Endothelial cell of umbilical vein (primary cell): ENCODE measurements at regions of chr1 and their contacts with region 1.

Region 1: GRCh38 chr1:58652651-58653184 is 47.1 kb downstream of the MYSM1 start:
- DNase-seq: peak; percentile 89
- H3K4me3 ChIP-seq: no peak overlapping the region
- H3K27ac ChIP-seq: no peak overlapping the region
- H3K4me1 ChIP-seq: no peaks in the 10 kb centered on the region
- H3K27me3 ChIP-seq: no peaks in the 10 kb centered on the region
- CTCF ChIP-seq: peak; percentile 64 to 82
- POLR2A ChIP-seq: no peak

Region 2: GRCh38 chr1:56831871-56832693 is 1820.6 kb before region 1 on chr1:
- CTCF ChIA-PET with region 1: interaction called, 4 read pairs
- POLR2A ChIA-PET with region 1: no interaction called
- dilution Hi-C with region 1: no loop called
- intact Hi-C with region 1: loop called (anchors 2 kb)
- DNase-seq: peak; percentile 87
- H3K4me3 ChIP-seq: no peak overlapping the region
- H3K27ac ChIP-seq: peak overlapping the region; percentile 53
- H3K4me1 ChIP-seq: peaks cover 9% of the 10 kb centered on the region
- H3K27me3 ChIP-seq: no peaks in the 10 kb centered on the region
- CTCF ChIP-seq: peak; percentile 86 to 93
- POLR2A ChIP-seq: no peak

Region 3: DNA sequence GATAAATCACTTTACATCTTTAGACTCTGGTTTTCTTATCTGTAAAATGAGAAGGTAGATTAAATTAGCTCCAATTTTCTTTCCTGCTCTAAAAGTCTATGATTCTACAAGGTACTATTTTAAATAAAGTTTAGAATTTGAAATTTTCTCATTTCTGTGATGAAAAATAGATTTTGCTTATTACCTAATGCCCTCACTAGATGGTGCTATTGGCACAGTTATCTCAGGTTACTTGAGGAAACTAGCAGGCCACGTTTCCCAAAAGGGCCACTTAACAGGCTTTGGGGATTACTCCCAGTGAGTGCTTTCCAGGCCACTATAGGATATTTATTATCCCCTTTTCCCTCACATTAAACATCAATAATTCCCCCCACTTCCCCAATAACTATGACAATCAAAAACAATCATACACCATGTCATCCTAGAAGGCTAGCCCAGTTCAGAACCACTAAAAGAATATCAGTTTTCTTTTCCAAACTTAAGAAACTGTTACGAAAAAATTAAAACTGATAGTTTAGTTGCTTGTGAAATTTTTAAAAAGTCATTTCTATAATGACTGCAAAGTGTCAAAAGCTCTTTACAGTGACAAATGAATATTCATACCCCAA is 136.8 kb before region 1 on chr1:
- CTCF ChIA-PET with region 1: interaction called, 110 read pairs
- POLR2A ChIA-PET with region 1: no interaction called
- dilution Hi-C with region 1: no loop called
- intact Hi-C with region 1: loop called (anchors 1 kb)
- DNase-seq: peak; percentile 71
- H3K4me3 ChIP-seq: no peak overlapping the region
- H3K27ac ChIP-seq: no peak overlapping the region
- H3K4me1 ChIP-seq: no peaks in the 10 kb centered on the region
- H3K27me3 ChIP-seq: no peaks in the 10 kb centered on the region
- CTCF ChIP-seq: peak; percentile 37 to 58
- POLR2A ChIP-seq: no peak

Region 4: DNA sequence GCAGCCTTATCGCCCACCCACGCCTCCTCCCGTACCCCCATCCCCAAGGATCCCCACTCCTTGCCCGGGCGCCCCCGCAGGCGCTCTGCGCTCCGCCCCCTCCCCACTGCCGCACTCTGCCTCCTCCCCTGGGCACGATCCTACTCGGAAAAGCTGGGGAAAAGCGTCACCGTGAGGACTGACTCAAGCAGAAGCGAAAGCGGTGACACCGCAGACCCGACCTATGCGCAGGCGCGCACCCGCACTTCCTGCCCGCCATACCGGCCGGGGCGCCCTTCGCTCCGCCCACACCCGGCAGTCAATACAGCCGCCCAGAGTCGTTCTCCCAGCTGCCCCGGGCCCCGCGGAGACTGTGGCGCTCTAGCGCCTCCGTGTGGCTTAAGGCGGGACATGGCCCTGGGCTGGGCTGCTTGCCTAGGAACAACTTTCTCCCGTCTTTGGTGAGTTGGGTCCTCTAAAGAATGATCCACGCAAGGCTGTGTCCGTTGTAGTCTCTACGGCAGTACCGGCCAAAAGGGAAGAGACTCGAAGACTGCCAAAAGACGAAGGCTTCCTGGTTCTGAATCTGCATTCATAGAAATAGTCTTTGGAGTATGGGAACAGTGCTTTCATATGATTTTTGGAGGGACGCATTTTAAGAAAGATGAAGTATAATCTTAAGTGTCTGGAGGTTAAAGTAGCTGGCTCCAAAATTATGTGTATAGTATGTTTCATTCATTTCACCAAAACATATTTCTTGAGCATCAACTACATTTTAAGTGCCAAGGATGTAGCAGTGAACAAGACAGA is 106.0 kb before region 1 on chr1 and contains the start of gene OMA1:
- CTCF ChIA-PET with region 1: interaction called, 73 read pairs
- POLR2A ChIA-PET with region 1: interaction called, 3 read pairs
- dilution Hi-C with region 1: no loop called
- intact Hi-C with region 1: loop called (anchors 1 kb)
- DNase-seq: peak; percentile 99
- H3K4me3 ChIP-seq: peak within 1 kb of the TSS; percentile 73 to 95 (median 76)
- H3K27ac ChIP-seq: peak within 1 kb of the TSS; percentile 84
- H3K4me1 ChIP-seq: peaks cover 4% of the 10 kb centered on the region
- H3K27me3 ChIP-seq: peaks cover 3 to 4% of the 10 kb centered on the region in 2 experiments
- CTCF ChIP-seq: peak; percentile 99
- POLR2A ChIP-seq: peak; percentile 76
- total RNA-seq, gene OMA1: 4.6 and 7.7 TPM in 2 replicates

Region 5: GRCh38 chr1:58584082-58584895 is 68.4 kb before region 1 on chr1:
- CTCF ChIA-PET with region 1: interaction called, 27 read pairs
- POLR2A ChIA-PET with region 1: no interaction called
- dilution Hi-C with region 1: no loop called
- intact Hi-C with region 1: no loop called
- DNase-seq: peak; percentile 89
- H3K4me3 ChIP-seq: peak overlapping the region in 1 of 3 experiments; percentile 6
- H3K27ac ChIP-seq: peak overlapping the region; percentile 89
- H3K4me1 ChIP-seq: peaks cover 40% of the 10 kb centered on the region
- H3K27me3 ChIP-seq: no peaks in the 10 kb centered on the region
- CTCF ChIP-seq: no peak
- POLR2A ChIP-seq: no peak

Region 6: DNA sequence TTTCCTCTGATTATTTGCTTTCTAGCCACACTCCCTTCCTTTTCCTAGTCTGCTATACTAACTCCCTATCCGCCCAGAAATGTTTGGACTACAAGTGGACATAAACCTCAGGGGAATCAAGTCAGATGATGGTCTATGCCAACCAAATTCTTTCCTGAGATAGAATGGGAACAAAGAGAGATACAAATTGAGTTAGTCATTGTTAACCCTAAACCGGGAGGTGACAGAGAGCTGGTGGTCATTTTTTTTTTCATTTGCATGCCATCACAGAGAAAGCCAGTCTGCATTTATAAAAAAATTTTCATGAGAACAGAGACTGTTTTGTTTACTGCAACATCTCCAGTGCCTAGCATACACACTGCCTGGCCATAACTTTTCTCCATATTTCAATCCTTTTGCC is 12.2 kb after region 1 on chr1:
- CTCF ChIA-PET with region 1: interaction called, 28 read pairs
- POLR2A ChIA-PET with region 1: no interaction called
- dilution Hi-C with region 1: no loop called
- intact Hi-C with region 1: no loop called
- DNase-seq: peak; percentile 64
- H3K4me3 ChIP-seq: no peak overlapping the region
- H3K27ac ChIP-seq: peak overlapping the region; percentile 20
- H3K4me1 ChIP-seq: peaks cover 28% of the 10 kb centered on the region
- H3K27me3 ChIP-seq: no peaks in the 10 kb centered on the region
- CTCF ChIP-seq: no peak
- POLR2A ChIP-seq: no peak